Aorta (tissue), 5 donors: ENCODE measurements at regions of chr3 and their contacts with region 1.

Region 1: DNA sequence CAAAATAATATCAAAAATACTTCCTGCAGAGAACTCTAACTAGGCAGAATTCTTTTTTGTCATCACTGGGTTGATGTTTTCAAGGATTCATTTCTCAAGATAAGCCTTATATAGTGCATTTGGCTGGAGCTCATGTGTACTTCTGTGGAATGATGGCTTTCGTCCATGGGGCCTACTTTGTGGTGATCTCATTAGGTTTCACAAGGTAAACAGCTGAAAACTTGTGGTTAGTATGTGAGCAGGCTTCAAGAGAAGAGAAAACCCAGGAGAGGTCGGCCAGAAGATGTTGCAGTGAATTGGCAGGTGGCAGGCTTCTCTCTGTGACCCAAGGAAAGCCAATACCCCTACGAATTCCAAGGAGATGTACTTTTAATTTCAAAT is 121.4 kb upstream of the PHLDB2 start:
- DNase-seq: peak in 1 of 2 donors; percentile 66
- ATAC-seq: peak; percentile 83
- H3K4me3 ChIP-seq: no peak overlapping the region
- H3K27ac ChIP-seq: peak overlapping the region in 1 of 2 donors; percentile 76
- H3K4me1 ChIP-seq: peaks cover 2 to 9% of the 10 kb centered on the region in 2 donors
- H3K27me3 ChIP-seq: no peaks in the 10 kb centered on the region

Region 2: GRCh38 chr3:111761309-111761831 is 23.7 kb after region 1 on chr3:
- intact Hi-C with region 1: loop called in 1 of 2 experiments (anchors 2 kb)
- DNase-seq: no peak
- ATAC-seq: peak; percentile 69
- H3K4me3 ChIP-seq: no peak overlapping the region
- H3K27ac ChIP-seq: peak overlapping the region; percentile 44 to 71
- H3K4me1 ChIP-seq: peaks cover 3 to 9% of the 10 kb centered on the region in 2 donors
- H3K27me3 ChIP-seq: no peaks in the 10 kb centered on the region

Region 3: DNA sequence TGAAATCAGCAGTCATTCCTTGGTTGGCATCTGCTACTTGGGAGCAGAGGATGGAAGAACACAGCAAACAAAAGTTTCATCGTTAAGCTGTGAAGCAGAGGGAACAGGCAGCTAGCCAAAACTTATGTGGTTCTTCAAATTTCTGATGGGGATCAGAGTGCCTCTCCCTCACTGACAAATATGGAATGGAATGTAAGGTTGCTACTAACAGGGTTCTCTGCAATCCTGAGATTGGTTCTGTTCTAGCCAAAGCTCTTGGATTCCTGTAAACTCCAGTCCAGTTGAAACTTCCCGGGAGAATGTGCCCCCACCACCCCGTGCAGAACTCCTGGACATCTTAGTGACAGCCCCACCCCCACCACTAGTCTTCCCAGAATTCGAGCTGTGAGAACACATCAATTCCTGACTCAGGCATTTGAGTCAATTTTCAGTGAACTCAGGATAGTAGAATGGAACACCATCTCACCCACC is 65.5 kb after region 1 on chr3:
- intact Hi-C with region 1: loop called (anchors 5 kb)
- DNase-seq: peak; percentile 91 to 92
- ATAC-seq: peak; percentile 87
- H3K4me3 ChIP-seq: no peak overlapping the region
- H3K27ac ChIP-seq: peak overlapping the region in 1 of 2 donors; percentile 27
- H3K4me1 ChIP-seq: peaks cover 0 to 9% of the 10 kb centered on the region in 2 donors
- H3K27me3 ChIP-seq: no peaks in the 10 kb centered on the region